ENCODE measurements at regions of chr22 and their contacts with region 1.

Region 1: DNA sequence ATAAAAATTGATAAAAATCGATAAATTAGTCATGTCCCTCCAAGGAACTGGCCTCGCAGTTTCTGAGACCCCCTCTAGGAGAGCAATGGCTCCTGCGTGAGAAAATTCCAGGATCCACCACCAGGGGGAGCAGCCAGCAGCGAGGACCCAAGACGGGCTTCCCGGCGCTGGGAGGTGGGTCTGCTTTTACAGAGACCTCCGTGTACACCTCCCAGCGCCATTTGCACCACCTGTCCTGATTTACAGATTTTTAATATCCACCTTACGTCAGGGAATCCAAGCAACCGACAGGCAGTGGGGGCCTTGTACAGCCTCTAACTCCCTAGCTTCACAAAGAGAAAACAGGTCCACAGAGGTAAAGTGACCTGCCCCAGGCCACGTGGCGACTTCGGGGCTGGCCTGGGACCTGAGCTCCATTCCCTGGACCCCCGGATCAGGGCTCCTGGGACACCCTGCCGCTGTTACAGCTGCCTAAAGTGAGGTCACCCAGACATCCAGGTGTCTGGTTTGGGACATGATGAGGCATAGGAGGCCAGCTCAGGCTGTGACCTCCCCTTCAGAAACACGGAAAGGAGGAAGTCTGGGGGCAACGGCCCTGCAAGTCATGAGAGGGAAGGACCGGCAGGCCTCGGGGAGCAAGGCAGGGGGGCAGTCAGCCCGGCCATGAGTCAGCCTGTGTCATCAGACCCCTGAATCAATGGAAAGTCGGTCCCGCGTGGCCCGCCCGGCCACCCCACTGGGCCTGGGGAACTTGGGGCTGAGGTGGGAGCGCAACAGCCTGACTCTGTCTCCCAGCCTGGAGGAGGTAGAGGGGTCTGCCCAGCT is 3.5 kb downstream of the OSM start:
- DNase-seq: peak; percentile 86
- ATAC-seq: no peak
- H3K4me3 ChIP-seq: peak overlapping the region in 3 of 5 experiments; percentile 13 to 42 (median 27)
- H3K4me3 Mint-ChIP-seq: peak overlapping the region; percentile 67
- H3K27ac ChIP-seq: no peak overlapping the region
- H3K27ac Mint-ChIP-seq: peak overlapping the region; percentile 37
- H3K4me1 ChIP-seq: peaks cover 20 to 35% of the 10 kb centered on the region in 2 donors
- H3K4me1 Mint-ChIP-seq: peaks cover 31% of the 10 kb centered on the region
- H3K27me3 ChIP-seq: no peaks in the 10 kb centered on the region
- H3K27me3 Mint-ChIP-seq: no peaks in the 10 kb centered on the region
- CTCF ChIP-seq: peak; percentile 100

Region 2: GRCh38 chr22:28800308-28801077 is 1462.6 kb before region 1 on chr22 and contains the start of gene XBP1:
- CTCF ChIA-PET with region 1: no interaction called
- POLR2A ChIA-PET with region 1: no interaction called
- intact Hi-C with region 1: loop called (anchors 5 kb)
- DNase-seq: peak; percentile 94
- ATAC-seq: peak; percentile 97
- H3K4me3 ChIP-seq: peak within 1 kb of the TSS; percentile 71 to 98 (median 91)
- H3K4me3 Mint-ChIP-seq: peak within 1 kb of the TSS; percentile 98
- H3K27ac ChIP-seq: peak within 1 kb of the TSS; percentile 63 to 96
- H3K27ac Mint-ChIP-seq: peak within 1 kb of the TSS; percentile 96
- H3K4me1 ChIP-seq: peaks cover 27 to 40% of the 10 kb centered on the region in 2 donors
- H3K4me1 Mint-ChIP-seq: peaks cover 51% of the 10 kb centered on the region
- H3K27me3 ChIP-seq: no peaks in the 10 kb centered on the region
- H3K27me3 Mint-ChIP-seq: no peaks in the 10 kb centered on the region
- CTCF ChIP-seq: no peak
- total RNA-seq, gene XBP1: 16.8 and 18.2 TPM in 2 replicates

Region 3: GRCh38 chr22:30205281-30206115 is 57.6 kb before region 1 on chr22:
- CTCF ChIA-PET with region 1: no interaction called
- POLR2A ChIA-PET with region 1: no interaction called
- intact Hi-C with region 1: no loop called
- DNase-seq: no peak
- ATAC-seq: no peak
- H3K4me3 ChIP-seq: no peak overlapping the region
- H3K4me3 Mint-ChIP-seq: no peak overlapping the region
- H3K27ac ChIP-seq: no peak overlapping the region
- H3K27ac Mint-ChIP-seq: no peak overlapping the region
- H3K4me1 ChIP-seq: no peaks in the 10 kb centered on the region
- H3K4me1 Mint-ChIP-seq: no peaks in the 10 kb centered on the region
- H3K27me3 ChIP-seq: no peaks in the 10 kb centered on the region
- H3K27me3 Mint-ChIP-seq: peaks cover 4% of the 10 kb centered on the region
- CTCF ChIP-seq: no peak

Region 4: DNA sequence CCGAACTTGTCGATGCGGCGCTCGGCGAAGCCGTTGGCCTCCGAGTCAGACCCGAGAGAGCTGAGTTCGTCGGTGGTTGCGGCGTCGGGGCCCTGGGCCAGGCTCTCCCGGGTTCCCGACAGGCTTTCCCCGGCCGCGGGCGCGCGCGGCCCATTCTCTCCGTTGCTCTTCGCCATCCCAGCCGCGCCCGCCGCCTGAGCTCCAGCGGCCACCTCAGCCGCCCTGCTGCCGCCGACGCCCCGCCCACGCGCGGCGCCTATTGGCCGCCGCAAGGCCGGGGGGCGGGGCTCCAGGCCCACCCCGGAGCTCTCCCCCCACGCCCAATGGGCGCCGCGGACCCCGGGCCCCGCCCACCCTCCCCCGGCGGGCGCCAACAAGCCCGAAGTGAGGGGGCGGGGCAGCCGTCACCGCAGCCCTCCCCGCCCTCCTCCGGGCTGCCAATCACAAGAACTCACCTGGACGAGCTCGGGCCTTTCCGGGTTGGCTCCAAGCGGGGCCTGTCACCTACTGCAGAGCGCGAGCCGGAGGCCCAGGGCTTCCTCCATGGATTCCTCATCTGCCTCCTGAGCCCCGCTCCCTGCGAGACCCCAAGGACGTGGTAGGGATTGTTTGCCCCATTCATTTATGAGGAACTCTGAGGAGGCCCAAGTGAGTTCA is 63.7 kb after region 1 on chr22 and contains the start of gene TBC1D10A:
- CTCF ChIA-PET with region 1: interaction called, 6 read pairs
- POLR2A ChIA-PET with region 1: no interaction called
- intact Hi-C with region 1: loop called (anchors 1 kb)
- DNase-seq: peak; percentile 95
- ATAC-seq: peak; percentile 96
- H3K4me3 ChIP-seq: peak within 1 kb of the TSS; percentile 40 to 92 (median 83)
- H3K4me3 Mint-ChIP-seq: peak within 1 kb of the TSS; percentile 86
- H3K27ac ChIP-seq: peak within 1 kb of the TSS; percentile 57 to 88
- H3K27ac Mint-ChIP-seq: peak within 1 kb of the TSS; percentile 93
- H3K4me1 ChIP-seq: peaks cover 30 to 43% of the 10 kb centered on the region in 2 donors
- H3K4me1 Mint-ChIP-seq: peaks cover 49% of the 10 kb centered on the region
- H3K27me3 ChIP-seq: no peaks in the 10 kb centered on the region
- H3K27me3 Mint-ChIP-seq: no peaks in the 10 kb centered on the region
- CTCF ChIP-seq: no peak
- total RNA-seq, gene TBC1D10A: 44.7 and 45.2 TPM in 2 replicates

Region 5: DNA sequence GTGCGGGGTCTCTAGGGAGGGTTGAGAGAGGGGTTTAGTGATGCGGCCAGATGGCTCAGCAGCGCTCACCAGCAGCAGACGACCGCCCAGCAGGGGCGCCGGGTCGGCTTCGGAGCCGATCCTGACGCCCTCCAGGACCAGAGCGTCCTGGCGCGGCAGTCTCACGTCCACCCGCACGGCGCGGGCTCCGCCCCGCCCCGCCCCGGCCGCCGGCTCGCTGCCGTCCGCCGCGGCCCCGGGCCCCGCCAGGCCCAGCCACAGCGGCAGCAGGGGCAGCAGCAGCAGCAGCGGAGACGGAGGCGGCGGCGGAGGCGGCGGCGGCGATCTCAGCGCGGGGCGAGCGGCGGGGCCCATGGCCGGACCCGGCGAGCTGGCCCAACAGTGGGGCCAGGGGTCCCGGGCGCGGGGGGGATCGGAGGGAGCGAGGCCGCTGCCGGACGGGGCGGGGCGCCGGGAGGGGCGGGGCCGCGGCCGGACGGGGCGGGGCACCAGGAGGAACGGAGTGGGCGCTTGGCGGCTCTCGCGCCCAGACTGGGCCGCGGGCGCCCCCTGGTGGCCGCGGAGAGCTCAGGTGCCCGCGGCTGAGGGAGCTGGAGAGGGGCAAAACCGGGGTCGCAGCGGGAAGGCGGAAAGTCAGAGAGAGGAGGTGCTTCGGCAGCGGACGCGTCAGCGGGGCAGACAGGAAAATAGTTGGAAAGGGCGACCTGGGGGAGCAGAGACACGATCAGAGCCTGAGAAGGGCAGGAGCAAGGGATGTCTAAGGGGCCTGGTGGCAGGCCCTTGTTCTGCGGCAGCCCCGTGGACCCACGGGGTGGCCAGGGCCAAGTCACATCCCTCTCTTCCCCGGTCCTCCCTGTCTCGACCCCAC is 124.1 kb after region 1 on chr22 and contains the start of gene RNF215:
- CTCF ChIA-PET with region 1: interaction called, 4 read pairs
- POLR2A ChIA-PET with region 1: interaction called, 4 read pairs
- intact Hi-C with region 1: loop called (anchors 1 kb)
- DNase-seq: peak; percentile 90
- ATAC-seq: peak; percentile 88
- H3K4me3 ChIP-seq: peak within 1 kb of the TSS in 4 of 5 experiments; percentile 25 to 61 (median 42)
- H3K4me3 Mint-ChIP-seq: peak within 1 kb of the TSS; percentile 83
- H3K27ac ChIP-seq: no peak within 1 kb of the TSS
- H3K27ac Mint-ChIP-seq: peak within 1 kb of the TSS; percentile 54
- H3K4me1 ChIP-seq: peaks cover 14 to 20% of the 10 kb centered on the region in 2 donors
- H3K4me1 Mint-ChIP-seq: peaks cover 21% of the 10 kb centered on the region
- H3K27me3 ChIP-seq: no peaks in the 10 kb centered on the region
- H3K27me3 Mint-ChIP-seq: no peaks in the 10 kb centered on the region
- CTCF ChIP-seq: peak; percentile 84
- total RNA-seq, gene RNF215: 16.7 and 18.6 TPM in 2 replicates

Region 6: DNA sequence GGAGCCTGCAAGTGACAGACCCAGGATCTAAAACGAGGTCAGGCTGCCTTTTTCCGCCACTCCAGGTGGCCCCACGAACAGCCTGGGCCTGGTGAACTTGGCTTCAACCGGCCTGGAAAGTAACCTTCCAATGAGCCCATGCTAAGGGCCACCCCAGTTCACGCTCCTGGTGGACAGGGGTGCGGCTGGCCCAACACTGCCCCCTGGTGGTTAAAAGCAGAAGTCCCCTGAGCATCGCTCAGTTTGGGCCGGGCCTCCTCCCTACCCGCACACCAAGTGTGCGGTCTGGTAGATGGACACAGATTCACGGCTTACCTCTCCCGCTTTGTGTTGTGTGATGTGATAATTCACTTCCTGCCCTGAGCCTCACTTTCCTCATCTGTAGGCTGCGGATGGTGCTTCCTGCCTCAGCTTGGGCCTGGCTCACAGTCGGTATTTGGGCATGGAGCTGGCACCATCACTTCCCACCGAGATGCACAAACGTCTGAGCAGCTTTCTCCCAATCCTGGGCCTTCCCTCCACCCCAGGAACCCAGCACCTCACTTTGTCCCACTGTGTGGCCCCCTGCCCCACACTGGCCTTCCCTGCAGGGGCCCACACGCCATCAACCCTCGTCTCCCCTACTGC is 222.3 kb after region 1 on chr22:
- CTCF ChIA-PET with region 1: no interaction called
- POLR2A ChIA-PET with region 1: no interaction called
- intact Hi-C with region 1: loop called (anchors 2 kb)
- DNase-seq: peak; percentile 80
- ATAC-seq: peak; percentile 96
- H3K4me3 ChIP-seq: no peak overlapping the region
- H3K4me3 Mint-ChIP-seq: no peak overlapping the region
- H3K27ac ChIP-seq: no peak overlapping the region
- H3K27ac Mint-ChIP-seq: no peak overlapping the region
- H3K4me1 ChIP-seq: no peaks in the 10 kb centered on the region
- H3K4me1 Mint-ChIP-seq: no peaks in the 10 kb centered on the region
- H3K27me3 ChIP-seq: peaks cover 0 to 3% (median 0%) of the 10 kb centered on the region in 4 experiments
- H3K27me3 Mint-ChIP-seq: peaks cover 20% of the 10 kb centered on the region
- CTCF ChIP-seq: peak; percentile 97